ENCODE measurements at regions of chr15 and their contacts with region 1.

Region 1: GRCh38 chr15:34101366-34102175 is at the starts of genes EMC7 and PGBD4:
- DNase-seq: peak; percentile 100
- total RNA-seq, gene EMC7: 57.1 to 62.6 TPM
- total RNA-seq, gene PGBD4: 1.2 to 1.4 TPM

Region 2: DNA sequence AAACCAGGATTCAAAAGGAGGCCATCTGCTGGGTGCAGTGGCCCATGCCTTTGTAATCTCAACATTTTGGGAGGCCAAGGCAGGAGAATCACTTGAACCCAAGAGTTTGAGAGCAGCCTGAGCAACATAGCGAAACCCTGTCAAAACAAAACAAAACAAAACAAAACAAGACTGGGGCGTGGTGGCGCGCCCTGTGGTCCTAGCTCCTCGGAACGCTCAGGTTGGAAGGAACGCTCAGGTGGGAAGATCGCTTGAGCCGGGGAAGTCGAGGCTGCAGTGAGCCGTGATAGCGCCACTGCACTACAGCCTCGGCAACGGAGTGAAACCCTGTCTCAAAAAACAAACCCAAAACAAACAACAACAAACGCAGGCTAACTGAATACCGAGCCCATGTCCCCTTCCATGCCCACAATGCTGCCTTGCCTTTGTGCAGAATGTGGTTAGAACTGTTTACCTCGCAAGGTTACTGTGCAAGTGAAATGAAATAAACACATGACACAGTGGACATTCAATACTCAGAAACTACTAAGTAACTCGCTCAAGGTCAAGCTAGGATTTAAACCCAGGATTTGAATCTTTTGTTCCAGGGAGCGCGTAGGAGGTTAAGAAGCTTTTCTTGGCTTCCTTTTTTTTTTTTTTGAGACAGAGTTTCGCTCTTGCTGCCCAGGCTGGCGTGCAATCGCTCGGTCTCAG is 122.5 kb after region 1 on chr15:
- intact Hi-C with region 1: loop called in 1 of 2 experiments (anchors 10 kb)
- DNase-seq: no peak

Measured in posterior vena cava (tissue), 2 donors.